ENCODE measurements at regions of chr21 and their contacts with region 1.

Region 1: GRCh38 chr21:39518138-39518846 is 66.5 kb downstream of the SH3BGR start:
- DNase-seq: peak; percentile 79
- CTCF ChIP-seq: peak; percentile 82

Region 2: GRCh38 chr21:39504230-39504629 is 14.1 kb before region 1 on chr21:
- CTCF ChIA-PET with region 1: interaction called, 16 read pairs
- POLR2A ChIA-PET with region 1: no interaction called
- DNase-seq: no peak
- CTCF ChIP-seq: no peak

Region 3: DNA sequence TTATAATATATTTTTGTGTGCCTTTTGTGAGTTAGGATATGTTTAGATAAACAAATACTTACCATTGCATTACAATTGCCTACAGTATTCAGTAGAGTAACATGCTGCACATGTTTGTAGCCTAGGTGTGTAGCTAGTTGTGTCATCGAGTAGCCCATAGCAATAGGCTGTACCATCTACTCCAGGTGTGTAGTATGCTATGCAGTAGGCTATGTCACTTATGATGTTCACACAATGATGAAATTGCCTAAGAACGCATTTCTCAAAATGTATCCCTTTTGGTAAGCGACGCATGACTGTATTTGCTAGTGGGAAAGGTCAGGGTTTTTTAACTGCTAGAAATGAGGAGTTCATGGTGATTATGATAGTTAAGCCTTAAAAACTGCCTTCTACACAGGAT is 64.5 kb after region 1 on chr21:
- CTCF ChIA-PET with region 1: no interaction called
- POLR2A ChIA-PET with region 1: no interaction called
- DNase-seq: no peak
- CTCF ChIP-seq: no peak

Region 4: GRCh38 chr21:39612233-39613040 is 94.1 kb after region 1 on chr21 and contains the start of gene B3GALT5:
- CTCF ChIA-PET with region 1: no interaction called
- POLR2A ChIA-PET with region 1: no interaction called
- DNase-seq: no peak
- CTCF ChIP-seq: no peak

Region 5: DNA sequence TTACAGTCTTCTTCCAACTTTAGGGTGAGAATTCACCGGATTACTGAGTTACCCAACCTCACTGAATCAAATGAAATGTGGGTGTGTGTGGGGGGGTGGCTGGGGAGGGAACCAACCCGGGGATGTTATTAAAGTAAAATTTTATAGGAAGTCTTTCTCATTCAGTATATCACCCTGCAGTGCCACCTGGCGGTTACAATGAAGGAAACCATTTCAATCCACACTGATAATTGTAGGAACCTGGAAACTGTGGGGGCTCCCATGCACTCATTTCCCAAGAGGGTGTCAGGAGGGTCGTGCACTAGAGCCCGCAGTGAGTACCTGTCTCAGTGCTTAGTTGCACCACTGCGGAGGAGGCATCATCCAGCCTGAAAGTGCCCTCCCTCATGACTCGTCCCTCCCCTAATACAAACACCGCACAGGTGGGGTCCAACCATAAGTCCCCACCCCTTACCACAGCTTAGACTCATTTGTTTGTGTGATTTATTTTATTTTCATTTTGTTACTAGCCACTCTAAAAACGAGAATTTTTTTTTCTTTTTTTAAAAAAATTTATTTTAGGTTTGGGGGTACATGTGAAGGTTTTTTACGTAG is 197.6 kb after region 1 on chr21:
- CTCF ChIA-PET with region 1: interaction called, 30 read pairs
- POLR2A ChIA-PET with region 1: no interaction called
- DNase-seq: peak; percentile 23
- CTCF ChIP-seq: peak; percentile 58

Measured in GM10248 (cell line).